Colonic mucosa (tissue), 4 donors: ENCODE measurements at regions of chr2 and their contacts with region 1.

Region 1: DNA sequence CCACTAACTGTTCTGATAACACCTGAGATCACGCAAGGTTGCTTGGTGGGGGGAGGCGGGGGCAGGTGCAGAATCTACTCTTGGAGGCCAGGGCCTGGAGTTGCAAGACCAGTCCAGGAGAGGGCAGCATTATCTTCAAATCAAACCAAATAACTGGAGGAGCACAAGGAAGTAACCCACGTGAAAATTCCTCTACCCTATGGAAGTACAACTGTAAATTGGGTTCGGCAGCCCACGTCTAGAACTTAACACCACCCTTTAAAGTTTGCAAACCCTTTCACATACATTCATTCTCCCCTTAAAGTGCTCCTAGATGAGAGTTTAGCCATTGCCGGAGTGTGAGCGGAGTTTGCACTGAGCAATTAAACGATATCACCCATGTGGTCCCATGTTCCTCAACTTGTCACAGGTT is 19.6 kb upstream of the CXCR1 start:
- DNase-seq: peak; percentile 83
- H3K4me3 ChIP-seq: no peak overlapping the region
- H3K27ac ChIP-seq: no peak overlapping the region
- H3K4me1 ChIP-seq: no peaks in the 10 kb centered on the region
- H3K27me3 ChIP-seq: no peaks in the 10 kb centered on the region
- CTCF ChIP-seq: peak; percentile 76

Region 2: DNA sequence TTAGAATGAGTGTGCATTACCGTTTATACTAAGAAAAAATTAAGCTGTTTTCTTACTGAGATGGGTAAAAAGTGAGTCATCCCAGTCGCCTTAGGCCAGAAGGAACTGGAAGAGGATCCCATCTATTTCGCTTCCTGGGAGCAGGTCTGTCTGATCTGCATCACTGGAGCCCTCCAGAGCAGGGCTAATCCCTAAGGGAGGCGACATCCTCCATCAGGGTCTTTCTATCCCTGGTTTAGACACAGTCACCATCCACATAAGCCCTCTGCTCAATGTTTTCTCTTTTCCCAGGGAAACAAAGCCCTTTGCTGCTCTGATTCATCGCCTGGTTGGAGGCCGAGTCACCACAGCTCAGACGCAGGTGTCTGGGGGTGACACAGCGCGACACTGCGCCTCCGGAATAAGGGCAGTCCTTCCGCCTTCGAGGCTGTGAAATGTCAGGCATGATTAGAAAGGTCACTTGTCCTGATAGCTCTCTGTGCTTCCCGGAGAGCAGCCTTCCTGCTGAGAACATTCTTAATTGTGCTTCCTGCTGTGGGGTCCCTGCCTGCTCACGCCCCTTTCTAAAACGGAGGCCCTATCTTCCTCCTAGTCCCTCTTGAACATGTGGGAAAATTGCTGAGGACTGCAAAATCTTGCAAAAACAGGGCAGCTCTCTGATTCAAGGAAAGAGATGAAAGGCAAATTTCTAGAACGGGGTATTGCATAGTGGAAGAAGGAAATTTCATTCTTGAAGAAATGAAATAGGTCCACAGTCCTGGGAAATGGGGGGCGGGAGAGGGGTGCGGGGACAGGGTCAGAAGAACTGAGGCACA is 1870.4 kb before region 1 on chr2:
- intact Hi-C with region 1: no loop called
- DNase-seq: no peak
- H3K4me3 ChIP-seq: no peak overlapping the region
- H3K27ac ChIP-seq: no peak overlapping the region
- H3K4me1 ChIP-seq: no peaks in the 10 kb centered on the region
- H3K27me3 ChIP-seq: no peaks in the 10 kb centered on the region
- CTCF ChIP-seq: no peak

Region 3: GRCh38 chr2:218245214-218245613 is 58.9 kb after region 1 on chr2:
- intact Hi-C with region 1: no loop called
- DNase-seq: no peak
- H3K4me3 ChIP-seq: no peak overlapping the region
- H3K27ac ChIP-seq: no peak overlapping the region
- H3K4me1 ChIP-seq: no peaks in the 10 kb centered on the region
- H3K27me3 ChIP-seq: no peaks in the 10 kb centered on the region
- CTCF ChIP-seq: no peak

Region 4: DNA sequence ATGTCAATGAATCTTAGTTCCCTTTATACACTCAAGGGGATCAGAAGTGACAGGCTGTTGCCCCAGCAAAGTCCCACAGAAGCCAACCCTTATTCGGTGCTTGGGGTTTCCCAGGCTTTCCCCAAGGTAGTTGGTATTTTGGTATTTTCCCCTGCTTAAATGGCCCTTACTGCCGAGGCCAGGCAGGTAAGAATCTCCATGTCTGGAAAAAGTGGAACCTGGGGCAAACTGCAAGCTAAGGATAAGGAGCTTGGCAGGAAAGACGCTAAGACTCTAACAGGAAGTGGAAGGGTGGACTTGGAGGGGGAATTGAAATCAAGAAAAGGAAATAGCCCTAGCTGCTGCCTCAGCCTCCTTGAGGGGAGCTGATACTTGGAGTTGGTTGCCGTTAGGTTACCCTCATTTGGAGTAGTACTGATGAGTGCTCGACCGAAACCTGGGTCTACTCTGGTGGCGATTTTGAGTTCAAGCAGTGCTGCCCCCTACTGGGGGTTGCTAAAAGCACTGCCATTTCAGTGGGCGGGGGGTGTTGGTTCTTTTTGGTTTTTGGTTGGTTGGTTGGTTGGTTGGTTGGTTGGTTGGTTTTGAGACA is 71.1 kb after region 1 on chr2:
- intact Hi-C with region 1: loop called (anchors 5 kb)
- DNase-seq: no peak
- H3K4me3 ChIP-seq: no peak overlapping the region
- H3K27ac ChIP-seq: peak overlapping the region; percentile 11
- H3K4me1 ChIP-seq: peaks cover 7% of the 10 kb centered on the region
- H3K27me3 ChIP-seq: no peaks in the 10 kb centered on the region
- CTCF ChIP-seq: no peak

Region 5: DNA sequence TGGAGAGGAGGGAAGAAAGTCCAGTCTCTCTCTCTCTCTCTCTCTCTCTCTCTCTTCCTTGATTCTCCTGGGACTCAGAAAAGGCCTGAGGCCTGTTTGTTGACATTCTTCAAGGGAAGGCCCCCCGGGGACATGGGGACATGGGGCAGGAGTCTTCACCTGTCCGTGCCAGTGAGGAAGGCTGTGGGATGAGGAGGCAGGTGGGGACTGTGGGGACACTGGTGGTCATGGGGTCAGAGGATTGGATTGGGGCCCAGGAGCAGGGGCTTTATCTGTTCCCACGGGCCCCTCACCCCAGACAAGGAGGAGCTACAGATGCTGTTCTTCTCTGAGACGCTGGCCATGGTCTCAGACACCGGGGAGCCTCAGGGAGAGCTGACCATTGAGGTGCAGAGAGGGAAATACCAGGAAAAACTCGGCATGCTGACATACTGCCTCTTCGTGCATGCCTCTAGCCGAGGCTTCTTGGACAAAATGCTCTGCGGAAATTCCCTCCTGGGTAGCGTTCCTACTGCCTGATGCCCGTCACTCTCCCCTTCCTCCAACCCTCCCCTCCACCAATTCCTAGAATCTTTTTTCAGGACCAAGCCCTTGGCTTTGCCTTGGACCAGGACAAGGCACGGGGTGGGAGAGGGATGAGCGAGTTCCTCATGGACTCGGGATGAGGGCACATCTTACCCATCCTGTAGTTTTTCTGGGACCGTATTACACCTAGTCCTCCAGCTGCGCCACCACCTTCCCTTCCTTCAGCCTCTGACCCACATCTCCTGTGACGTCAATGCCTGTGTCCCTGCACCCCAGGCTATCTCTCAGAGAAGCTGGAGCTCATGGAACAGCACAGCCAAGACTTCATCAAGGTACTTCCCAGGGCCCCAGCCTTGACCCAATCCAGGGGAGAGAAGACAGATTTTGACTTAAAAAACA is 171.1 kb after region 1 on chr2:
- intact Hi-C with region 1: loop called (anchors 10 kb)
- DNase-seq: no peak
- H3K4me3 ChIP-seq: no peak overlapping the region
- H3K27ac ChIP-seq: no peak overlapping the region
- H3K4me1 ChIP-seq: no peaks in the 10 kb centered on the region
- H3K27me3 ChIP-seq: no peaks in the 10 kb centered on the region
- CTCF ChIP-seq: no peak